Right cardiac atrium (tissue), 5 donors: ENCODE measurements at regions of chr11 and their contacts with region 1.

Region 1: GRCh38 chr11:126355324-126355925 is at the start of gene ST3GAL4:
- DNase-seq: peak; percentile 89 to 96 (median 96)
- ATAC-seq: peak; percentile 85 to 86
- H3K4me3 ChIP-seq: peak within 1 kb of the TSS; percentile 92
- H3K27ac ChIP-seq: peak within 1 kb of the TSS; percentile 97
- H3K4me1 ChIP-seq: peaks cover 36% of the 10 kb centered on the region
- H3K27me3 ChIP-seq: no peaks in the 10 kb centered on the region
- total RNA-seq, gene ST3GAL4: 57.3 to 96.9 (median 65.4) TPM

Region 2: DNA sequence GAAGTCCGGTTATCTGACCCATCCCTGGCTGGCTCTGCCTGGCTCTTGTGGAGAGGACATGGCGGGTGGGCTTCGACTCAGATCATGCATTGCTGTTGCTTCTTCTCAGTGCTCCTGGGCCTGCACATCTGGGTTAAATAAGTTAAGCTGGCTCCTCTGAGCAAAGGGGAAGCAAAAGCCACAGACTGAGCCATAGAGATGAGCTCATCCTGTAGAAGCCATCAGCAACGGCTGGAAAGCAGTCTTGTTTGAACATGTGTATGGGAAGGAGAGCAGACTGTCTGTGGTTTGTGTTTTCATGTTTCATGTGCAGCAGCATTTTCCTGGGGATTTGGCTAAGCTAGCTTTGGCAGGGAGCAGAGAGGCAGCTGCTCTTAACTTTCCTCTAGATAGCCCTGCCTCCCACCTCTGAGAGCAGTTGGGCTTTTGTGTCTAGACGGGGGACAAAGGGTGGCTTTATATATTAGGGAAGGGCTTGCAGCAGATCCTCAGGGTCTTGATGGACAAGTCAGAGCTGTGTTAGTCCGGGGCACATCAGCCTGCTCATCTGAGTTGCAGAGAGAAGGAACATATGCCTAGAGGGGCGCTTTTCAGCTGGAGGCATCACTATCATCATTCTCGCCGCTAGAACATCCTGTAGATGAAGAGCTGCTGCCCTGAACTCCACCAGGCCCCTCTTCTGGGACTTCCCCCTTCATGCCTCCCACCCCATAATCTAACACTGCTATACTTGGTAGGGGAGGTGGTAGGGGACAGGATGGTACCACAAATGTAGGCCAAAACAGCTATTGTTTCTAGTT is 36.7 kb before region 1 on chr11:
- intact Hi-C with region 1: loop called in 3 of 4 experiments (anchors 5 kb)
- DNase-seq: peak in 2 of 3 donors; percentile 40 to 71
- ATAC-seq: peak; percentile 73 to 80
- H3K4me3 ChIP-seq: no peak overlapping the region
- H3K27ac ChIP-seq: peak overlapping the region; percentile 95
- H3K4me1 ChIP-seq: peaks cover 13% of the 10 kb centered on the region
- H3K27me3 ChIP-seq: no peaks in the 10 kb centered on the region

Region 3: GRCh38 chr11:126416542-126417090 is 61.2 kb after region 1 on chr11:
- intact Hi-C with region 1: loop called in 1 of 4 experiments (anchors 5 kb)
- DNase-seq: peak; percentile 94 to 98 (median 97)
- ATAC-seq: peak; percentile 80 to 84
- H3K4me3 ChIP-seq: peak overlapping the region; percentile 8
- H3K27ac ChIP-seq: peak overlapping the region; percentile 93
- H3K4me1 ChIP-seq: peaks cover 26% of the 10 kb centered on the region
- H3K27me3 ChIP-seq: no peaks in the 10 kb centered on the region

Region 4: GRCh38 chr11:126426820-126427749 is 71.7 kb after region 1 on chr11:
- intact Hi-C with region 1: no loop called
- DNase-seq: peak in 2 of 3 donors; percentile 46 to 68
- ATAC-seq: no peak
- H3K4me3 ChIP-seq: no peak overlapping the region
- H3K27ac ChIP-seq: peak overlapping the region; percentile 79
- H3K4me1 ChIP-seq: peaks cover 24% of the 10 kb centered on the region
- H3K27me3 ChIP-seq: no peaks in the 10 kb centered on the region